MCF 10A (cell line): ENCODE measurements at regions of chr11 and their contacts with region 1.

Region 1: DNA sequence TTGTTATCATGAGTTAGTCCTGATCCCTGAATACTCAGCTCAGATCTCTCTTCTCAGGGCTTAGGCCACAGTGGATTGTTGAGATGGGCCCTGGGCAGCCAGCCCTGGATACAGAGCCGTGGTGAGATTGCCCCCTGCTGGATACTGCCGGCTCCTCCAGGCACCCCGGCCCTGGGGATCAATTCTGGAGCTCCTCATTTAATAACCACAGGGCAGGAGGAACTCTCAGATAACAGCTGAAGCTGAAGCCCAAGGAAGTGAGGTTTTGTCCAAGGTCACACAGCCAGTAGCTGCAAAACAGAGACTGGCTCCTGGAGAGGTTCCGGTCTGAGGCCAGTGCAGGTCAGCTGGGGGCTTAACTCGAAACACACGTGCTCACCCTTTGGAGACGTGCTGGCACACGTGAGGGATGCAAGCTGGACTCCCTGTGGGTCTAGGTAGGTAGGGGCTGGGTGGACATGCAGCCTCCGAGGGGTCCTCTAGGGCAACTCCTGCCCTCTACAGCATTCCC is 16.0 kb downstream of the USH1C start:
- DNase-seq: peak; percentile 54
- H3K4me3 Mint-ChIP-seq: no peak overlapping the region
- H3K27ac Mint-ChIP-seq: no peak overlapping the region
- H3K4me1 Mint-ChIP-seq: no peaks in the 10 kb centered on the region
- H3K27me3 Mint-ChIP-seq: peaks cover 43% of the 10 kb centered on the region
- CTCF ChIP-seq: peak; percentile 70

Region 2: GRCh38 chr11:17230867-17231851 is 297.1 kb before region 1 on chr11:
- CTCF ChIA-PET with region 1: interaction called, 20 read pairs
- POLR2A ChIA-PET with region 1: no interaction called
- intact Hi-C with region 1: loop called (anchors 1 kb)
- DNase-seq: no peak
- H3K4me3 Mint-ChIP-seq: no peak overlapping the region
- H3K27ac Mint-ChIP-seq: no peak overlapping the region
- H3K4me1 Mint-ChIP-seq: peaks cover 6% of the 10 kb centered on the region
- H3K27me3 Mint-ChIP-seq: no peaks in the 10 kb centered on the region
- CTCF ChIP-seq: no peak

Region 3: DNA sequence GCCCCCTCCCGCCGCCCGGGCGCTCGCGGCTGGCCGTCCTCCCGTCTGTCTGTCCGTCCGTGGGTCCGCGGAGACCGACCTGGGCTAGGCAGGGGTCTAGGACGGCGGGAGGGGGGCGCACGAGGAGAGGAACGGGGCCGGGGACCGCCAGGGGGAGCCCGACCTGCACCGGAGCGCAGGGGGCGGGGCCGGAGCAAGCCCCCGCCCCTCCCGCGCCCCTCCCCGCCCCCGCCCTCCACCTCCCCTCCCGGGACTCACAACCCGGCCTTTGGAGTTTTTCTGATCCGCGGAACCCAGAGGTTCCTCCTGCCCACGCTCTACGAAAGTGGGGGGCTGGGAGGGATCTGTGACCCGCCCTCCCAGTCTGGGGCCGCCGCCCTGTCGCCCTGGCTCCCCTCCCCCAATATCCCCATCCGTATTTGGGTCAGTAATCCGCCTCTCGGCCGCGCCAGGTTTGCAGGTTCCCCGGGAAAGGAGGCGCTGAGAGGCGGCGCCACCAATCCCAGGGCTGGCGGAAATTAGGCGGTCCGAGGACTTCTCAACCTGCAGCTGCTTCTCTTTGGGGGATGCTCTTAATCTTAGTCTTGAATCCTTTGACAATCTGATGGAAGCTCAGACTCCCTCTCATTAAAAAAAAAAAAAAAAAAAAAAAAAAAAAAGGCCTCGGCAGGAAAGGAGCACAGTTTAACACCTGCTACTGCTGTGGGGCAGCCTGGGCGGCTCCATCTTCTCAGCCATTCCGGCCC is 138.9 kb before region 1 on chr11:
- CTCF ChIA-PET with region 1: interaction called, 68 read pairs
- POLR2A ChIA-PET with region 1: interaction called, 5 read pairs
- intact Hi-C with region 1: loop called (anchors 1 kb)
- DNase-seq: peak; percentile 74
- H3K4me3 Mint-ChIP-seq: peak overlapping the region; percentile 71
- H3K27ac Mint-ChIP-seq: no peak overlapping the region
- H3K4me1 Mint-ChIP-seq: no peaks in the 10 kb centered on the region
- H3K27me3 Mint-ChIP-seq: no peaks in the 10 kb centered on the region
- CTCF ChIP-seq: peak; percentile 91

Region 4: DNA sequence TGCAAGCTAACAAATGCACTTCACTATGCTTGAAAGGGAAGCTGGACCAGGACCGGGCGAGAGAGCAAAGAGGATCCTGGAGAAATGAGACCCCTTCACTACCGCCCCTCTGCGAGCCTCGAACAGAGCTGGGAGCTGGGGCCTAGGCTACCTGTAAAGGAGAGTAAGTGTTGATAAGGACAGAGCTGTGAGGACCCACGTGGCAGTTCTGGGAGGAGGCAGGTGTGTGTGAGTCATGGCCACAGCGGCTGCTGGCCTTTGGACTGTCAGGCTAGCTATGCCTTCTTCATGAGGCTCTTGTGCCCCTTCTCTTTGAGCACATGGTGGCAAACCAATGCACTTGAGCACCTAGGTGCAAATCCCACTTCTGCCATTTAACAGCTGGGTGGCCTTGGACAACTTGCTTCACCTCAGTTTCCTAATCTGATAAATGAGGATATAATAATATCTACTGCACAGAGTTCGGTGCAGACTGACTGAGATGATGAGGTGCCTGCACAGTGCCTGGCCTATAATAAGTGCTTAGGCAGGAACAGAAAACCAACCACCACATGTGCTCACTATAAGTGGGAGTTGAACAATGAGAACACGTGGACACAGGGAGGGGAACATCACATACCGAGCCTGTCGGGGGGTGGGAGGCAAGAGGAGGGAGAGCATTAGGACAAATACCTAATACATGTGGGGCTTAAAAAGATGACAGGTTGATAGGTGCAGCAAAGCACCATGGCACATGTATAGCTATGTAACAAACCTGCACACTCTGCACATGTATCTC is 104.5 kb before region 1 on chr11:
- CTCF ChIA-PET with region 1: no interaction called
- POLR2A ChIA-PET with region 1: no interaction called
- intact Hi-C with region 1: no loop called
- DNase-seq: peak; percentile 19
- H3K4me3 Mint-ChIP-seq: no peak overlapping the region
- H3K27ac Mint-ChIP-seq: no peak overlapping the region
- H3K4me1 Mint-ChIP-seq: no peaks in the 10 kb centered on the region
- H3K27me3 Mint-ChIP-seq: peaks cover 59% of the 10 kb centered on the region
- CTCF ChIP-seq: no peak

Region 5: DNA sequence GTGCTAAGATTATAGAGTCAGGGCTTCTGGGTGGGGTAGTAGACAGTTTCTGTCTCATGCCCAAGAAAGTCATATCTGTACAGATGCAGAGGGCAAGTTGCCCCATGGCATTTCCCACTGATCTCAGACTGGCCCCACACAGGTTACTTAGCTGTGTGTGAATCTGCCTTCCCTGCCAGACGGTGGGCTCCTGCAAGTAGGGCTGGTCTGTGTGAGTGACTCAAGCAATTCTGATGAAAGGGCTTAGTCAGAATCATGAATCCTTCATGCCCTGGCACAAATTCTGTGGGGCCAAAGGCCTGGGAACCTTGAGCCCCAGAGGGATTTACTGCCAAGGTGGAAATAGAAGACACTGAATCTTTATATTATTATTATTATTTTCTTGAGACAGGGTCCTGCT is 14.4 kb before region 1 on chr11:
- CTCF ChIA-PET with region 1: interaction called, 98 read pairs
- POLR2A ChIA-PET with region 1: no interaction called
- intact Hi-C with region 1: no loop called
- DNase-seq: peak; percentile 40
- H3K4me3 Mint-ChIP-seq: no peak overlapping the region
- H3K27ac Mint-ChIP-seq: no peak overlapping the region
- H3K4me1 Mint-ChIP-seq: peaks cover 5% of the 10 kb centered on the region
- H3K27me3 Mint-ChIP-seq: peaks cover 41% of the 10 kb centered on the region
- CTCF ChIP-seq: no peak

Region 6: GRCh38 chr11:17547051-17547577 is 18.9 kb after region 1 on chr11 and contains the start of gene OTOG:
- CTCF ChIA-PET with region 1: interaction called, 13 read pairs
- POLR2A ChIA-PET with region 1: no interaction called
- intact Hi-C with region 1: no loop called
- DNase-seq: peak; percentile 79
- H3K4me3 Mint-ChIP-seq: no peak within 1 kb of the TSS
- H3K27ac Mint-ChIP-seq: no peak within 1 kb of the TSS
- H3K4me1 Mint-ChIP-seq: no peaks in the 10 kb centered on the region
- H3K27me3 Mint-ChIP-seq: peaks cover 24% of the 10 kb centered on the region
- CTCF ChIP-seq: no peak
- total RNA-seq, gene OTOG: not detected in 2 replicates